PC-3 (cell line): ENCODE measurements at regions of chr10 and their contacts with region 1.

Region 1: GRCh38 chr10:74262856-74263255 is 111.8 kb downstream of the ADK start:
- DNase-seq: no peak
- ATAC-seq: no peak
- H3K4me3 ChIP-seq: no peak overlapping the region
- H3K27ac ChIP-seq: no peak overlapping the region
- H3K4me1 ChIP-seq: peaks cover 12% of the 10 kb centered on the region
- H3K27me3 ChIP-seq: no peaks in the 10 kb centered on the region
- CTCF ChIP-seq: no peak

Region 2: DNA sequence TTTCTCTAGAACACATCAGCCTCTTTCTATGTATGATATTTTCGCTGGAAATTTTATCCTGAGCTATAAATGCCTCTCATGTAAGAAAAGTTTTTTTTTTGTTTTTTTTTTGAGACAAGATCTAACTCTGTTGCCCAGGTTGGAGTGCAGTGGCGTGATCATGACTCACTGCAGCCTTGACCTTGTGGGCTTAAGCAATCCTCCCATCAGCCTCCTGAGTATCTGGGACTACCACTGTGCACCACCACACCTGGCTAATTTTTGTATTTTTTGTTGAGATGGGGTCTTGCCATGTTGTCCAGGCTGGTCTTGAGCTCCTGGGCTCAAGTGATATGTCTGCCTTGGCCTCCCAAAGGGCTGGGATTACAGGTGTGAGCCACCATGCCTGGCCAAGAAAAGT is 31.5 kb before region 1 on chr10:
- CTCF ChIA-PET with region 1: no interaction called
- POLR2A ChIA-PET with region 1: no interaction called
- intact Hi-C with region 1: no loop called
- DNase-seq: peak; percentile 95
- ATAC-seq: peak; percentile 63
- H3K4me3 ChIP-seq: no peak overlapping the region
- H3K27ac ChIP-seq: peak overlapping the region; percentile 23
- H3K4me1 ChIP-seq: peaks cover 39% of the 10 kb centered on the region
- H3K27me3 ChIP-seq: no peaks in the 10 kb centered on the region
- CTCF ChIP-seq: no peak

Region 3: GRCh38 chr10:74328388-74328787 is 65.5 kb after region 1 on chr10:
- CTCF ChIA-PET with region 1: no interaction called
- POLR2A ChIA-PET with region 1: no interaction called
- intact Hi-C with region 1: no loop called
- DNase-seq: no peak
- ATAC-seq: no peak
- H3K4me3 ChIP-seq: no peak overlapping the region
- H3K27ac ChIP-seq: no peak overlapping the region
- H3K4me1 ChIP-seq: no peaks in the 10 kb centered on the region
- H3K27me3 ChIP-seq: no peaks in the 10 kb centered on the region
- CTCF ChIP-seq: no peak

Region 4: GRCh38 chr10:74394416-74394969 is 131.6 kb after region 1 on chr10:
- CTCF ChIA-PET with region 1: no interaction called
- POLR2A ChIA-PET with region 1: no interaction called
- intact Hi-C with region 1: loop called (anchors 5 kb)
- DNase-seq: peak; percentile 43
- ATAC-seq: peak; percentile 85
- H3K4me3 ChIP-seq: no peak overlapping the region
- H3K27ac ChIP-seq: no peak overlapping the region
- H3K4me1 ChIP-seq: no peaks in the 10 kb centered on the region; the same call in 1 of the 2 replicates
- H3K27me3 ChIP-seq: no peaks in the 10 kb centered on the region
- CTCF ChIP-seq: no peak

Region 5: GRCh38 chr10:74432841-74433594 is 170.2 kb after region 1 on chr10:
- CTCF ChIA-PET with region 1: no interaction called
- POLR2A ChIA-PET with region 1: no interaction called
- intact Hi-C with region 1: loop called (anchors 2 kb)
- DNase-seq: peak; percentile 70
- ATAC-seq: peak; percentile 82
- H3K4me3 ChIP-seq: no peak overlapping the region
- H3K27ac ChIP-seq: peak overlapping the region; percentile 46
- H3K4me1 ChIP-seq: peaks cover 29% of the 10 kb centered on the region
- H3K27me3 ChIP-seq: no peaks in the 10 kb centered on the region
- CTCF ChIP-seq: no peak

Region 6: DNA sequence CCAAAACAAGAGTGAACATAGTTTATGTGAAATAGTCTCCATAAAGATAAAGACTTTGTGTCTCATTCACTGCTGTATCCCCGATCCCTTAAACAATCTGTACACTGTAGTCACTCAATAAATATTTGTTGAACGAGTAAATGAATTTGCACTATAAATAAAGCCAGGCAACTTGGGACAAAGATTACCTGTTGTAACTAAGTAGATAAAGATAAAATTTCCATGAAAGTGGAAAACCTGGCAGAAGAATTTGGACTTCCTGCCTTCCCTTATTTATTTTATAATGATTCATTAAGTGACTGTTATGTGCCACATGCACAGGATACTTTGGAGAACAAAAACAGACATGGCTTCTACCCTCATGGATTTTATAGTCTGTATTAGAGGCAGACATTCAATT is 285.8 kb after region 1 on chr10:
- CTCF ChIA-PET with region 1: no interaction called
- POLR2A ChIA-PET with region 1: no interaction called
- intact Hi-C with region 1: loop called (anchors 1 kb)
- DNase-seq: peak; percentile 100
- ATAC-seq: peak; percentile 97
- H3K4me3 ChIP-seq: peak overlapping the region; percentile 4; the same call in 1 of the 2 replicates
- H3K27ac ChIP-seq: peak overlapping the region; percentile 66
- H3K4me1 ChIP-seq: peaks cover 21% of the 10 kb centered on the region
- H3K27me3 ChIP-seq: no peaks in the 10 kb centered on the region
- CTCF ChIP-seq: no peak

Region 7: GRCh38 chr10:74704629-74705357 is 441.9 kb after region 1 on chr10:
- CTCF ChIA-PET with region 1: no interaction called
- POLR2A ChIA-PET with region 1: no interaction called
- intact Hi-C with region 1: loop called (anchors 1 kb)
- DNase-seq: peak; percentile 95
- ATAC-seq: peak; percentile 95
- H3K4me3 ChIP-seq: no peak overlapping the region
- H3K27ac ChIP-seq: peak overlapping the region; percentile 28
- H3K4me1 ChIP-seq: peaks cover 15% of the 10 kb centered on the region
- H3K27me3 ChIP-seq: no peaks in the 10 kb centered on the region
- CTCF ChIP-seq: no peak

Region 8: GRCh38 chr10:74753442-74754211 is 490.8 kb after region 1 on chr10:
- CTCF ChIA-PET with region 1: no interaction called
- POLR2A ChIA-PET with region 1: no interaction called
- intact Hi-C with region 1: loop called (anchors 1 kb)
- DNase-seq: peak; percentile 100
- ATAC-seq: peak; percentile 86
- H3K4me3 ChIP-seq: peak overlapping the region; percentile 30
- H3K27ac ChIP-seq: peak overlapping the region; percentile 82
- H3K4me1 ChIP-seq: peaks cover 25% of the 10 kb centered on the region
- H3K27me3 ChIP-seq: no peaks in the 10 kb centered on the region
- CTCF ChIP-seq: peak; percentile 51

Region 9: DNA sequence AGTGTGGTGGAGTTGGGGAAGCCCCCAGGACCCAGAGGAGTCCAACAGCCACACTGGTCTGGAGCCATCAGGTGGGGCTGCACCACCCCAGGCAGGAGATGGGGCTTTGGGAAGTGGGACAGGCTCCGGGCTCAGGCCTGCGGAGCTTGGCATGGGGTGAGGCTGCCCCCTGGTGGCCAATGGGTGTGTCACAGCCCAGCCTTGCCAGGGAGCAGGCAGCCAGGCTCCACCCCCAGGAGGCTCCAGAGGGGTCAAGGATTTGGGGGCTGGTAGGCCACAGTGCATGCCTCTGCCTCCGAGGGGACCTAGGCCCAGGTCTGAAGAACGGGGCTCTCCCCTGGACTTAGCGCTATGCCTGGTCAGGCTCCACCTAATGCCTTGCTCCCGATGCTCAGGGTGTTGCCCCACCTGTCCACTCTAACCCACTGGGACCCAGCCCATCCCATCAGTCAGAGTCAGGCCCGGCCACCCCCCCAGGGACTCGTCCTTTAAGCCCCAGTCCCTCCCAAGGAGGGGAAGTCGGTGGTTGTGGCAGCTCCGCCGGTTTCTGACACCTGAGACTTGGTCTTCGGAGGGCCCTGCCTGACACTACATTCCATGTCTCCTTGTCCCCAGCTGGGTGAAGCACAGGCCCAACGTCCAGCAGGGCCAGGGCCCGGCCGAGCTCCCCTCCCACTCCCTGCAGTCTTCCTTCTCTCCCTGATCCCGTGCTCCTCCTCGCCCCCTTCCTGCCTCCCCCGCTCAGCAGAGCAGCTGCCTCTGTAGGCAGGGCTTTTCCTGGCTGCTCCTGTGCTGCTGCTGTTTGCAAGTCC is 837.3 kb after region 1 on chr10:
- CTCF ChIA-PET with region 1: no interaction called
- POLR2A ChIA-PET with region 1: no interaction called
- intact Hi-C with region 1: loop called (anchors 1 kb)
- DNase-seq: peak; percentile 99
- ATAC-seq: peak; percentile 90
- H3K4me3 ChIP-seq: no peak overlapping the region
- H3K27ac ChIP-seq: no peak overlapping the region
- H3K4me1 ChIP-seq: peaks cover 7% of the 10 kb centered on the region; the same call in 1 of the 2 replicates
- H3K27me3 ChIP-seq: no peaks in the 10 kb centered on the region
- CTCF ChIP-seq: peak; percentile 100